ENCODE measurements at regions of chr10 and their contacts with region 1.

Region 1: GRCh38 chr10:99394761-99395386 is 35.5 kb downstream of the GOT1 start:
- DNase-seq: no peak
- H3K4me3 ChIP-seq: no peak overlapping the region
- H3K27ac ChIP-seq: no peak overlapping the region
- H3K4me1 ChIP-seq: peaks cover 3 to 25% (median 18%) of the 10 kb centered on the region in 4 experiments
- H3K27me3 ChIP-seq: no peaks in the 10 kb centered on the region

Region 2: GRCh38 chr10:99125879-99126278 is 269.0 kb before region 1 on chr10:
- CTCF ChIA-PET with region 1: no interaction called
- POLR2A ChIA-PET with region 1: no interaction called
- DNase-seq: no peak
- H3K4me3 ChIP-seq: no peak overlapping the region
- H3K27ac ChIP-seq: no peak overlapping the region
- H3K4me1 ChIP-seq: no peaks in the 10 kb centered on the region
- H3K27me3 ChIP-seq: no peaks in the 10 kb centered on the region

Region 3: GRCh38 chr10:99382181-99382580 is 12.7 kb before region 1 on chr10:
- CTCF ChIA-PET with region 1: interaction called, 12 read pairs
- POLR2A ChIA-PET with region 1: no interaction called
- DNase-seq: no peak
- H3K4me3 ChIP-seq: no peak overlapping the region
- H3K27ac ChIP-seq: no peak overlapping the region
- H3K4me1 ChIP-seq: no peaks in the 10 kb centered on the region
- H3K27me3 ChIP-seq: no peaks in the 10 kb centered on the region

Region 4: GRCh38 chr10:99595770-99596465 is 201.0 kb after region 1 on chr10:
- CTCF ChIA-PET with region 1: no interaction called
- POLR2A ChIA-PET with region 1: no interaction called
- DNase-seq: no peak
- H3K4me3 ChIP-seq: no peak overlapping the region
- H3K27ac ChIP-seq: no peak overlapping the region
- H3K4me1 ChIP-seq: peaks cover 0 to 4% (median 0%) of the 10 kb centered on the region in 4 experiments
- H3K27me3 ChIP-seq: no peaks in the 10 kb centered on the region